ENCODE measurements at regions of chr10 and their contacts with region 1.

Region 1: DNA sequence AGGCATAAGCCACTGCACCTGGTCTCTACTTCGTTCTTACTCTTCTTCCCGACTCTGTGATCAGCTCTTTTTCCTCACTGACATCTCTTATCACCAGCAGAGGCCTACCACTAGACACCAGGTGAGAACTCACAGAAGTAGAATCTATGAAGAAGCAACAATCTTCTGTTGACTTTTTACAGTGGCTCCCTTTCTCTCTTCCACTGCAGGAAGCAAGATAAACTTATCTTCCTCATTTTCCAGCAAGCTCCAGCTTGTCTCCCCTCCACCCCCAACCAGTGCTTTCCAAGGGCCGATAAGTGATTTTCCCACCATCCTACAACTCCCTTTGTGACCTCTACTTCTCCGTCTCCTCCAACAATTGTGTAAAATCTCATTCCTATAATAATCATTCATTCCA is 45.5 kb downstream of the TLX1 start:
- DNase-seq: no peak
- ATAC-seq: no peak
- H3K4me3 Mint-ChIP-seq: no peak overlapping the region
- H3K27ac Mint-ChIP-seq: no peak overlapping the region
- H3K4me1 Mint-ChIP-seq: no peaks in the 10 kb centered on the region
- H3K27me3 Mint-ChIP-seq: peaks cover 35% of the 10 kb centered on the region
- CTCF ChIP-seq: no peak

Region 2: GRCh38 chr10:101161494-101162299 is 14.9 kb before region 1 on chr10:
- CTCF ChIA-PET with region 1: interaction called, 13 read pairs
- POLR2A ChIA-PET with region 1: no interaction called
- intact Hi-C with region 1: no loop called
- DNase-seq: peak; percentile 77
- ATAC-seq: peak; percentile 96
- H3K4me3 Mint-ChIP-seq: no peak overlapping the region
- H3K27ac Mint-ChIP-seq: no peak overlapping the region
- H3K4me1 Mint-ChIP-seq: peaks cover 5% of the 10 kb centered on the region
- H3K27me3 Mint-ChIP-seq: peaks cover 52% of the 10 kb centered on the region
- CTCF ChIP-seq: peak; percentile 95